ENCODE measurements at regions of chr14 and their contacts with region 1.

Region 1: GRCh38 chr14:64540208-64541157 is at the start of gene HSPA2:
- DNase-seq: peak; percentile 97 to 100 (median 99)

Region 2: GRCh38 chr14:64503478-64504309 is 36.8 kb before region 1 on chr14 and contains the start of gene ZBTB25:
- intact Hi-C with region 1: loop called (anchors 2 kb)
- DNase-seq: peak; percentile 76 to 97 (median 92)

Region 3: GRCh38 chr14:64636208-64636979 is 95.9 kb after region 1 on chr14:
- intact Hi-C with region 1: loop called (anchors 2 kb)
- DNase-seq: peak; percentile 63 to 93 (median 83)

Measured in head of caudate nucleus (tissue), 42 donors.